Pancreas (tissue), 10 donors: ENCODE measurements at regions of chr4 and their contacts with region 1.

Region 1: DNA sequence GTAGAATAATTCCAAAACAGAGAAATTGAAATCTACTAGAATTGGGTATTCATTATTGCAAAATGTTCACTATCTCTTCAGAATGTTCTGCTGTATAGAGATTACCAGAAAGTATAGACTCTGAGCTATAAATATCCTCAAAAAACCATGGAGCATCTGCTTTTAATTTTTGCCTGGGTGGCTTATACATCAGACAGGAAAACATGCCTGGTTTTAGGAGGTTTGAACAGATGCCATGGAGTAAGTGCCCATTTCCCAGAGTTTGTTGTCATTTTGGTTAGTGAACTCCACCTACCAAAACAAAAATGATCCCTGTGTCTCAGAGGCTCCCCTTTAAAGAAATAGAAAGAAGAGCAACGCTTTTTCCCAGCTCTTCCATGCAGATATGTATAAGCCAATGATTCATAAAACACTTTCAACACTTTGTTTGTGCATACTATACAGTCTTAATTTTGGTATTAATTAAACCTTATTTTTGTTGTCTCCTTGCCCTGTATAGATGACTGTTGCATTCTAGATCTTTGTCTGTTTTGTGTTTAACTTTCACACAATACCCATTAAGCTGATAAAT is 68.7 kb downstream of the MEPE start:
- DNase-seq: no peak
- ATAC-seq: no peak
- H3K4me3 ChIP-seq: no peak overlapping the region
- H3K27ac ChIP-seq: no peak overlapping the region
- H3K4me1 ChIP-seq: no peaks in the 10 kb centered on the region
- H3K27me3 ChIP-seq: no peaks in the 10 kb centered on the region
- CTCF ChIP-seq: no peak

Region 2: GRCh38 chr4:87574996-87575395 is 326.5 kb before region 1 on chr4:
- intact Hi-C with region 1: no loop called
- DNase-seq: no peak
- ATAC-seq: no peak
- H3K4me3 ChIP-seq: no peak overlapping the region
- H3K27ac ChIP-seq: no peak overlapping the region
- H3K4me1 ChIP-seq: no peaks in the 10 kb centered on the region
- H3K27me3 ChIP-seq: peaks cover 0 to 3% (median 0%) of the 10 kb centered on the region in 4 donors
- CTCF ChIP-seq: no peak

Region 3: DNA sequence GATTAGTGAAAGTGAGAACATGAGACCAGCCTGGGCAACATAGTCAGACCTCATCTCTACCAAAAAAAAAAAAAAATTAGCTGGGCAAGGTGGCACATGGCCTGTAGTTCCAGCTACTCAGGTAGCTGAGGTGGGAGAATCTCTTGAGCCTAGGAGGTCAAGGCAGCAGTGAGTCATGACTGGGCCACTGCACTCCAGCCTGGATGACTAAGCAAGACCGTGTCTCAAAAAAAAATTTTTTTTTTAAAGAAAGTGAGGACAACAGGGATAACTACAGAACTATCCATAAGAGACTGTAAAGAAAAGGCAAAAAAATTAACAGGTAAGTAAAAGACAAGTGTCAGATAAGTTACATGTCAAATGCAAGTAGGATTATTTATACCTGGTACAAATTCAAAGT is 60.5 kb after region 1 on chr4:
- intact Hi-C with region 1: loop called in 1 of 3 experiments (anchors 10 kb)
- DNase-seq: no peak
- ATAC-seq: peak in 2 of 4 donors; percentile 27 to 30
- H3K4me3 ChIP-seq: no peak overlapping the region
- H3K27ac ChIP-seq: no peak overlapping the region
- H3K4me1 ChIP-seq: no peaks in the 10 kb centered on the region
- H3K27me3 ChIP-seq: no peaks in the 10 kb centered on the region
- CTCF ChIP-seq: no peak